Aorta (tissue), 5 donors: ENCODE measurements at regions of chr5 and their contacts with region 1.

Region 1: GRCh38 chr5:179697993-179698934 is 503 bp upstream of the CANX start:
- DNase-seq: peak; percentile 99
- ATAC-seq: peak; percentile 99
- H3K4me3 ChIP-seq: peak overlapping the region; percentile 4 to 52
- H3K27ac ChIP-seq: peak overlapping the region; percentile 0 to 59
- H3K4me1 ChIP-seq: no peaks in the 10 kb centered on the region
- H3K27me3 ChIP-seq: no peaks in the 10 kb centered on the region

Region 2: DNA sequence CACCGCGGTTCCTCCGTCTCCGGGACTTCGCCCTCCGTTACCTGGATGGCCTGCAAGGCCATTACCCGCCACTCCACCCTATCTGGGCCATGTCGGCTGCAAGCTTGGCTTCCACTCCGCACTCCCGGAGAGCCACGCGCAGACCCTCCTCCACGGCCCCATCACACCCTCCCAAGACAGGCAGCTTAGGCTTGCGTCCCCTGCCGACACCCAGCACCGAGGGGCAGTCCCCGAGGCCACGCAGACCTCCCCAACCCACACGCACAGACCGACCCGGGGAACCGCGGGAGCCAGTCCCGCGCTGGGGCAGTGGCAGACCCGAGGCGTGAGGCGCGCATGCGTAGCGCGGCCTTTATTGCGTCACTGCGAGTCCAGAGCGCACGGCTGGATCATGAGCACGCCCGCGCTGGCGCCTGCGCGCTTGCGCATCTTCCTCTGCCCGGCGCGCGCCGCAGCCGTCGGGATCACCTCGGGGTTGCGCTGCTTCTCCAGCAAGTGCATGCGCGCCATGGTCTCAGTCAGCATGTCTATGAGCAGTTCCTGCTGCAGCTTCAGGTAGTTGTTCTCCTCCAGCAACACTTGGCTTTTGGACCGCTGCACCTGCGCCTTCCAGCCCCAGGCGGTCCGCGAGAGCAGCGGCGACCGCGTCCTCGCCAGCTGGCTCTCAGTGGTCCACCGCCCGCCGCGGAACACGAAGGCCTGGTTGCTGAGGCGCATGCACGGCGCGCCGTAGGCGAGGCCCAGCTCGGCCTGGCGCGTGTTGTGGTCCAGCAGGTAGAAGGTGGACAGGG is 19.8 kb before region 1 on chr5:
- intact Hi-C with region 1: loop called in 1 of 2 experiments (anchors 2 kb)
- DNase-seq: peak; percentile 98 to 99
- ATAC-seq: peak; percentile 98
- H3K4me3 ChIP-seq: peak overlapping the region; percentile 38 to 77
- H3K27ac ChIP-seq: peak overlapping the region in 1 of 2 donors; percentile 17
- H3K4me1 ChIP-seq: no peaks in the 10 kb centered on the region
- H3K27me3 ChIP-seq: no peaks in the 10 kb centered on the region

Region 3: GRCh38 chr5:179716286-179716685 is 18.0 kb after region 1 on chr5:
- intact Hi-C with region 1: no loop called
- DNase-seq: no peak
- ATAC-seq: no peak
- H3K4me3 ChIP-seq: no peak overlapping the region
- H3K27ac ChIP-seq: no peak overlapping the region
- H3K4me1 ChIP-seq: no peaks in the 10 kb centered on the region
- H3K27me3 ChIP-seq: no peaks in the 10 kb centered on the region

Region 4: DNA sequence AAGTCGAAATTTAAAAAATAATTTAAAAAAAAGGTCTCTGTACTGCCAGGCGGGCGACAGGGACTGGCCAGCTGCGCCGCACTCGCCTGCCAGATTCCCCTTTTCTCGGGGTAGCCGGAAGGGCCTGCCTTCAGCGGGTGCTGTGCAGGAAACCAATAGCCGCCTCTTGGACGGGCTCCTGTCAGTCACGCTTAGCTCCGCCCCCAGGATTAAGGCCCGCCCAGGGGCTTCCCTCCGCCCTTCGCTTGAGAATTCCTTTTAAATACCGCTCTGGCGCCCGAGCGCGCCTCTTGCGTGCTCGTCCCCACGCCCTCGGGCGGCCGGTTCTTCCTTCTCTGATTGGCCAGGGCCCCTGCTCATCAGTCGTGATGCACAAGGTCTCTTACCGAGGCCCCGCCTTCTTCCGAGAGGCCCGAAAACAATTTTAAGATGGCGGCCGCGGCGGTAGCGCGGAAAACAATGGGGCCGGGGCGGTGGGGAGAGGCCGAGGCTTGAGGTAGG is 34.2 kb after region 1 on chr5 and contains the start of gene MAML1:
- intact Hi-C with region 1: loop called (anchors 2 kb)
- DNase-seq: peak; percentile 100
- ATAC-seq: peak; percentile 100
- H3K4me3 ChIP-seq: peak within 1 kb of the TSS; percentile 81 to 85
- H3K27ac ChIP-seq: peak within 1 kb of the TSS; percentile 83 to 90
- H3K4me1 ChIP-seq: no peaks in the 10 kb centered on the region
- H3K27me3 ChIP-seq: no peaks in the 10 kb centered on the region
- total RNA-seq, gene MAML1: 26.1 to 35.3 TPM